ENCODE measurements at regions of chr3 and their contacts with region 1.

Region 1: DNA sequence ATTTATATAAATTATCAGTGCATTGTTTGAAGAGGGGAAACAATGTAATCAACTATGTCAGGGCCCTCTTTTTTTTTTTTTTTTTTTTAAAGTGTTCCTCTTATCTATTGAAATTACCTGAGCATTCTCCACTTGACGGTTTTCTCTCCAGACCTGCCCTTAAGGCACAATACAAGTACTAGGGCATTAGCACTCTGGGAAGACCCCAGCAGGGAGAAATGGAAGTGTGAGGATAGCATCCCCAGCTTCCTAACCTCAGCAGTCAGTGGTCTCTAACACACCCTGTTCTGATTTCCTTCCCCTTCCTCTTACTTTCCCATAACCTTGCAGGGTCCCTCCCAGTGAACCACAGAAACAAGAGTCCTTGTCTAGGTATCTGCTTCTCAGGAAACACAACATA is 458.3 kb upstream of the ARL6 start:
- DNase-seq: no peak
- ATAC-seq: no peak
- H3K4me3 ChIP-seq: no peak overlapping the region
- H3K27ac ChIP-seq: no peak overlapping the region
- H3K4me1 ChIP-seq: no peaks in the 10 kb centered on the region
- H3K27me3 ChIP-seq: no peaks in the 10 kb centered on the region
- CTCF ChIP-seq: no peak

Region 2: GRCh38 chr3:97256060-97256459 is 50.2 kb before region 1 on chr3:
- CTCF ChIA-PET with region 1: no interaction called
- POLR2A ChIA-PET with region 1: no interaction called
- intact Hi-C with region 1: loop called (anchors 10 kb)
- DNase-seq: no peak
- ATAC-seq: no peak
- H3K4me3 ChIP-seq: no peak overlapping the region
- H3K27ac ChIP-seq: no peak overlapping the region
- H3K4me1 ChIP-seq: no peaks in the 10 kb centered on the region
- H3K27me3 ChIP-seq: no peaks in the 10 kb centered on the region
- CTCF ChIP-seq: no peak